Dorsolateral prefrontal cortex (tissue), 120 donors: ENCODE measurements at regions of chr17 and their contacts with region 1.

Region 1: DNA sequence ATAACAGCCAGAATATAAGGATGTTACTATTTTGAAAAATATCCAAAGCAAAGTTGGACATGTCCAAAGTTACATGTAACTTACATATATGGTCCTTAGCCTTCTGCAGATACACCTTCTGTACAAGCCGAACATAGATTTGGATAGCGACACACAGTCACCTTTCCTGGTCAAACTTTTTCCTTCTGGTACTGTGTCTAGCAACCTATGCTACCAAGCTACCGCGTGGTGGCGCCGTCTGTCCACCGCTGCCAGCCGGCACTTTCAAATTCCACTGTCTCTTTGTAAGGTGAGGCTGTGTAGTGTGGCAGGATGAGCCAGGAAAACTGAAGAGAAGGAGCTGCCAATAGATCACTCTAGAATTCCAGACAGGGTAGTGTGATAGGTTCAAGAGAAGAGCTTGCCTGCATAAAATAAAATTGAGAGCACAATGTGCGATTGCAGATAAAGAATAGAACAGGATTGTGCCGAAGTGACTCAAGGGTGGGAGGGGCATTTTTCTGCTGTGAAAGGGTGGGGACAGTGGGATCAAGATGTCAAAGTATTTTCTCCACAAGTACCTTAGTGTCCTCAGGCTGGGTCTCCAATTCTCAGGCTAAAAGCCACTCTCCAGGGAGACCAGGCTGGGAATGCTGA is 366.9 kb downstream of the SLC39A11 start:
- DNase-seq: peak; percentile 43 to 81 (median 70)
- H3K4me3 ChIP-seq: no peak overlapping the region
- H3K27ac ChIP-seq: no peak overlapping the region
- H3K27me3 ChIP-seq: no peaks in the 10 kb centered on the region
- CTCF ChIP-seq: peak; percentile 51 to 98 (median 87)

Region 2: DNA sequence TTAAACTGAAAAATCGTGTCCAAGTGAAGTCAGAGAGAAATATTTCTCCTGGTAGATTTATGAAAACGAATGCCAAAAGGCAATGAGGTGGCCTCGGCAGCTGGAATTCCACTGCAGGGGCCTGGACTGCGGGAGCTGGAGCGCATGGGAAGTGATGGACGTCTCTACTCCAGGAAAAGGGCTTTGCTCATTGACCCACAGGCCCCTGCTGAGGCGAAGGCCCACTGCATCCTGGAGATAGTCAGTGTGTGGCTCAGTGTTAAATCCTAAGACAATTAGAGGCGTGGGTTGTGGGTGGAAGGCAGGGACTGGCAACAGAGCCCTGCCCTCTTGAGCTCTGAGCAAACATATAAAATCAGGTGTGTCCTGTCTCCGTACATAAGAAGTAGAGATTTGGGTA is 175.5 kb after region 1 on chr17:
- intact Hi-C with region 1: no loop called
- DNase-seq: no peak
- H3K4me3 ChIP-seq: no peak overlapping the region
- H3K27ac ChIP-seq: peak overlapping the region in 2 of 59 donors; percentile 18 to 20
- H3K27me3 ChIP-seq: no peaks in the 10 kb centered on the region
- CTCF ChIP-seq: no peak

Region 3: GRCh38 chr17:72916991-72917390 is 191.4 kb after region 1 on chr17:
- intact Hi-C with region 1: loop called in 1 of 2 experiments (anchors 10 kb)
- DNase-seq: no peak
- H3K4me3 ChIP-seq: no peak overlapping the region
- H3K27ac ChIP-seq: no peak overlapping the region
- H3K27me3 ChIP-seq: no peaks in the 10 kb centered on the region
- CTCF ChIP-seq: no peak

Region 4: GRCh38 chr17:72985881-72986720 is 260.6 kb after region 1 on chr17:
- intact Hi-C with region 1: loop called in 1 of 2 experiments (anchors 5 kb)
- DNase-seq: peak; percentile 45 to 85 (median 74)
- H3K4me3 ChIP-seq: no peak overlapping the region
- H3K27ac ChIP-seq: peak overlapping the region in 25 of 59 donors; percentile 0 to 88 (median 53)
- H3K27me3 ChIP-seq: no peaks in the 10 kb centered on the region
- CTCF ChIP-seq: peak; percentile 65 to 95 (median 86)

Region 5: DNA sequence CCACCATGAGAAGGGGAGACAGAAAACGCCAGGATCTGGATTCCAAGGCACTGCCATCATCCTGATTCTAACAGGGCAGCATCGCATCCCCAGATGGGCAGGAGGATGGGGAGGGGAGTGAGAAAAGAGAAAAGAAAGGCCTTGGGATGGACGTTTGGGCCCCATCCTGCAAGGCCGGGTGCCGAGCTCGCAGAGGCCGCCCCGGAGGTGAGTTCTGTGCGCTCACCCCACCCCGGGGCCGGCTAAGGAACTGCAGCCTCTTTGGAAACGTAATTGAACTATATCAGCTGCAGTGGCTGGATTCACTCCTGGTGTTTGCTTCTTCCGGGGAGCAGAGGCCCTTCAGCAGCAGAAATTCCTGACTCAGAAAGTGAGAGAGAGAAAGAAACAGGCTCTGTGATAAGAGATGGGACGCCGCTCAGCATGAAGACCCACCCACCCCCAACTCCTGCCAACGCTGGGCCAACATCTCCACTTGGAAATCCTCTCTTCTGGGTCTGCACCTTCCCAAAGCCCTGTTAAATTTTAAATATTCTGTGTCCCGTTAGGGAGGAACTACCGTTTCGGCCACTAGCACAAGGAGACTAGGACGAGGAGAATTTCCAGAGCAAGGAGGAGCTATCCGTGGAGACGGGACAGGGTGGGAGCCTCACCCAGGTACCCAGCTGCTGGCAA is 430.8 kb after region 1 on chr17:
- intact Hi-C with region 1: loop called in 1 of 2 experiments (anchors 10 kb)
- DNase-seq: peak; percentile 71 to 82 (median 76)
- H3K4me3 ChIP-seq: peak overlapping the region in 9 of 59 donors; percentile 6 to 41 (median 26)
- H3K27ac ChIP-seq: peak overlapping the region in 47 of 59 donors; percentile 1 to 83 (median 55)
- H3K27me3 ChIP-seq: no peaks in the 10 kb centered on the region
- CTCF ChIP-seq: peak; percentile 38 to 90 (median 81)

Region 6: GRCh38 chr17:73255671-73256181 is 530.2 kb after region 1 on chr17:
- intact Hi-C with region 1: loop called in 1 of 2 experiments (anchors 10 kb)
- DNase-seq: peak in 8 of 10 donors; percentile 61 to 78 (median 71)
- H3K4me3 ChIP-seq: peak overlapping the region in 1 of 59 donors; percentile 12
- H3K27ac ChIP-seq: peak overlapping the region in 2 of 59 donors; percentile 24 to 26
- H3K27me3 ChIP-seq: no peaks in the 10 kb centered on the region
- CTCF ChIP-seq: peak; percentile 94 to 100 (median 99)

Region 7: DNA sequence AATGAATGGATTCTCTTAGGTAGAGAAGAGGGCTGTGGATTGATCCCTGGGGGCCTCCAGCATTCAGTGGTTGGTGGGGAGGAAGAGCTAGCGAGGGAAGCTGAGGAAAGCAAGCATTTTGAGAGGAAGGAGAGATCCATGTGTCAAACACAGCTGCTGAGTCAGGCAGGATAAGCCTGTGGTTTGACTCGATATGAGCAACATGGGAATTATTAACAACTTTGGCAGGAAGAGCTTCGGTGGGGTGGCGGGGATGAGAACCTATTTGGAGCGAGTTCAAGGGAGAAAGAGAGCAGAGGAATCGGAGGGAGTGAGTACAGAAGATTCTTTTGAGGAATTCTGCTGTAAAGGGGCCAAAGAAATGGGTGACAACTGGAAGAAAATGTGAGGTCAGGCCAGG is 645.7 kb after region 1 on chr17:
- intact Hi-C with region 1: loop called (anchors 5 to 10 kb)
- DNase-seq: no peak
- H3K4me3 ChIP-seq: no peak overlapping the region
- H3K27ac ChIP-seq: no peak overlapping the region
- H3K27me3 ChIP-seq: no peaks in the 10 kb centered on the region
- CTCF ChIP-seq: no peak